ENCODE measurements at regions of chr15 and their contacts with region 1.

Region 1: GRCh38 chr15:70376929-70377691 is 279.4 kb upstream of the TLE3 start:
- DNase-seq: peak; percentile 43
- H3K4me3 ChIP-seq: peak overlapping the region in 1 of 3 experiments; percentile 24
- H3K27ac ChIP-seq: no peak overlapping the region
- H3K4me1 ChIP-seq: peaks cover 30% of the 10 kb centered on the region
- H3K27me3 ChIP-seq: no peaks in the 10 kb centered on the region
- CTCF ChIP-seq: no peak

Region 2: DNA sequence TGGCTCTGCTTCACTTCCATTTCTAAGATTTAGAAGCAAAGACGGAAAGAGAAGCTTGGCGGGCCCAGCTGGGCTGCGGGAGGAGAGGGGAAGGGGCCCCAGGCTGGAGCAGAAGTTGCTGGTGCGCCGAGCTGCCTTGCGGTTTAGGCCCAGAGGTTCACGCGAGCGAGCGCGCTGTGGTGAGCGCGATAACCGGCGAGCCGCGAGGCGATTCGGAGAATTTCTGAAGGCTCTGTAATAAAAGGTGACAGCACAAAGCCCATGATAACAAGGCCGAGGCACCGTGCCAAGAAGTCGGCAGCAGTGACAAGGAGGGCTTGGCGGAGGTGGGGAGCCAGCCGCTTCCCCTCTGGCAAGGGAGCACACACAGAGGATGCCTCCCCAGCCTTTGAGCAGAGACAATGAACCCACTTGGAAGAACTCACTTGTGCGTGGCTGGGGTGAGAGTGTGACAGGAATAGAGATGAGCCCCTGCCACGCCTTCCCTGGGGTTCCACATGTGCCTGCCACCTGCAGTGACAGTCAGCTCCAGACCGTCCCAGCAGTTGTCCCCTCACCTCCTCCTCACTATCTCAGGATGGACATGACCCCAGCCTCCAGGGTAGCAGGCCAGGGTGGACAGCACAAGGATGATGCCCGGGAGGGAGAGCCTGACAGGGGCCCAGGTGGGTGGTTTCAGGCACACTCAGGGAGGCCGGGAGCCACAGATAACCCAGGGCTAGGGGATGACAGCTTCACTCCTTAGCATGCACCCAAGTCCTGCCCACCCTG is 71.0 kb after region 1 on chr15:
- CTCF ChIA-PET with region 1: no interaction called
- dilution Hi-C with region 1: loop called (anchors 10 kb)
- in situ Hi-C with region 1: no loop called
- intact Hi-C with region 1: no loop called
- DNase-seq: no peak
- H3K4me3 ChIP-seq: no peak overlapping the region
- H3K27ac ChIP-seq: no peak overlapping the region
- H3K4me1 ChIP-seq: no peaks in the 10 kb centered on the region
- H3K27me3 ChIP-seq: peaks cover 5% of the 10 kb centered on the region
- CTCF ChIP-seq: no peak

Measured in mammary epithelial cell (primary cell).